ENCODE measurements at regions of chr1 and their contacts with region 1.

Region 1: GRCh38 chr1:83931658-83932253 is 67.2 kb downstream of the TTLL7 start:
- DNase-seq: no peak
- H3K4me3 ChIP-seq: no peak overlapping the region
- H3K27ac ChIP-seq: no peak overlapping the region
- H3K4me1 ChIP-seq: no peaks in the 10 kb centered on the region
- H3K27me3 ChIP-seq: no peaks in the 10 kb centered on the region
- CTCF ChIP-seq: peak; percentile 21 to 71 (median 63)
- POLR2A ChIP-seq: no peak

Region 2: DNA sequence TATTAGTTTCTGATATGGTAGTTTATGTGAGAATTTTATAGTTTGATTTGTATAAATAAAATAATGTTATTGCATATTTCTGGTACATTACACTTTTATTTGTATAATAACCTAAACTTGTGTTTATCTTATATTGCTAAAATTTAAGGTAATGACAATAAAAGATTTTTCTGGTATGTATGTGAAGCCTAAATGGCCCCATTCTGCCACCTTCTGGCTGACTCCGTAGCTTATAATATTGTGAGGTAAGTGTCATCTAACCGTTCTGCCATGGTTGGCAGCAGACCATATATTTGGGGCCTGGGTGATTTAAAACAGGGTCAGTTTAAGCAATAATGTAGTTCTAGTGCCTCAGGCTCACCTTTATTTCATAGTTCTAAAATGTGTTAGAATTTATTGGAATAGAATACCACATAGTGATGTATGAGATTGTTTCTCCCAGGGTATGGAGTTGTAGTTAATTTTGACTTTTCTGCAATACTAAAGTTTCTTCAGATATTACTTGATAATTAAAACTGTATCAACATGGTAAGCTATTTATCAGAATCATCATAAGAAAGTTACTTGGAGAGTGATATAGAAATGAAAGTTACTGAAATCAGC is 191.1 kb after region 1 on chr1:
- intact Hi-C with region 1: loop called (anchors 5 kb)
- DNase-seq: no peak
- H3K4me3 ChIP-seq: no peak overlapping the region
- H3K27ac ChIP-seq: no peak overlapping the region
- H3K4me1 ChIP-seq: no peaks in the 10 kb centered on the region
- H3K27me3 ChIP-seq: no peaks in the 10 kb centered on the region
- CTCF ChIP-seq: peak in 10 of 11 experiments; percentile 12 to 56 (median 44)
- POLR2A ChIP-seq: no peak

Region 3: GRCh38 chr1:84753516-84754385 is 822.0 kb after region 1 on chr1:
- intact Hi-C with region 1: loop called (anchors 5 kb)
- DNase-seq: peak; percentile 86
- H3K4me3 ChIP-seq: no peak overlapping the region
- H3K27ac ChIP-seq: no peak overlapping the region
- H3K4me1 ChIP-seq: peaks cover 0 to 2% (median 0%) of the 10 kb centered on the region in 6 donors
- H3K27me3 ChIP-seq: peaks cover 0 to 12% (median 0%) of the 10 kb centered on the region in 7 donors
- CTCF ChIP-seq: peak; percentile 68 to 92 (median 81)
- POLR2A ChIP-seq: no peak

Measured in spleen (tissue), 13 donors.